Tibial artery (tissue), 4 donors: ENCODE measurements at regions of chr17 and their contacts with region 1.

Region 1: GRCh38 chr17:27430882-27431491 is 25.3 kb upstream of the KSR1 start:
- DNase-seq: no peak
- H3K4me3 ChIP-seq: no peak overlapping the region
- H3K27ac ChIP-seq: no peak overlapping the region
- H3K4me1 ChIP-seq: no peaks in the 10 kb centered on the region
- H3K27me3 ChIP-seq: no peaks in the 10 kb centered on the region
- CTCF ChIP-seq: peak; percentile 46 to 52

Region 2: GRCh38 chr17:27381007-27381501 is 49.9 kb before region 1 on chr17:
- intact Hi-C with region 1: loop called (anchors 10 kb)
- DNase-seq: peak; percentile 40 to 77
- H3K4me3 ChIP-seq: no peak overlapping the region
- H3K27ac ChIP-seq: peak overlapping the region in 1 of 2 donors; percentile 60
- H3K4me1 ChIP-seq: peaks cover 0 to 39% (median 25%) of the 10 kb centered on the region in 4 donors
- H3K27me3 ChIP-seq: no peaks in the 10 kb centered on the region
- CTCF ChIP-seq: peak; percentile 76 to 84

Region 3: GRCh38 chr17:27466743-27467375 is 35.9 kb after region 1 on chr17:
- intact Hi-C with region 1: no loop called
- DNase-seq: no peak
- H3K4me3 ChIP-seq: no peak overlapping the region
- H3K27ac ChIP-seq: no peak overlapping the region
- H3K4me1 ChIP-seq: peaks cover 0 to 22% (median 5%) of the 10 kb centered on the region in 4 donors
- H3K27me3 ChIP-seq: no peaks in the 10 kb centered on the region
- CTCF ChIP-seq: no peak

Region 4: DNA sequence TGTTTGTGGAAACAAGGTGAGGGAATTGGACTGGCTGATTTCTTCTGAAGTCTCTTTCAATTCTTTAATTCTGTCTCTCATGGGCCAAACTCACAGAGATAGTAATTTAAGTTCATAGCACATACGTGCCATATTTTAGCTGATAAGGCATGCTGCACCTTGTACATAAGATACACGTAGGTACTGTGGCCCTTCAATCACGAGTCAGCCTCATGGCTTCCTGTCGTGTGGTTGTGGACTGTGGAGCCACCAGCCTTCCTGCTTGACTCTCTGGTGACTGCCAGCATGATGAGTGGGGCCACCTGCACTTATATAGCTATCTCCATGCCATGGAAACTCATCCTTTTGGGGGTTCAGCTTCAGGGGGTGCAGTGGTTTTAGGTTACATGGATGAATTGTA is 50.3 kb after region 1 on chr17:
- intact Hi-C with region 1: no loop called
- DNase-seq: no peak
- H3K4me3 ChIP-seq: no peak overlapping the region
- H3K27ac ChIP-seq: no peak overlapping the region
- H3K4me1 ChIP-seq: no peaks in the 10 kb centered on the region
- H3K27me3 ChIP-seq: no peaks in the 10 kb centered on the region
- CTCF ChIP-seq: no peak